B cell (primary cell): ENCODE measurements at regions of chr13 and their contacts with region 1.

Region 1: GRCh38 chr13:100235311-100235901 is 146.5 kb downstream of the PCCA start:
- DNase-seq: peak; percentile 50
- ATAC-seq: no peak
- H3K4me3 ChIP-seq: no peak overlapping the region
- H3K4me3 Mint-ChIP-seq: peak overlapping the region; percentile 23
- H3K27ac ChIP-seq: no peak overlapping the region
- H3K27ac Mint-ChIP-seq: no peak overlapping the region
- H3K4me1 ChIP-seq: peaks cover 6 to 7% of the 10 kb centered on the region in 2 donors
- H3K4me1 Mint-ChIP-seq: peaks cover 6% of the 10 kb centered on the region
- H3K27me3 ChIP-seq: no peaks in the 10 kb centered on the region
- H3K27me3 Mint-ChIP-seq: no peaks in the 10 kb centered on the region
- CTCF ChIP-seq: peak; percentile 67

Region 2: DNA sequence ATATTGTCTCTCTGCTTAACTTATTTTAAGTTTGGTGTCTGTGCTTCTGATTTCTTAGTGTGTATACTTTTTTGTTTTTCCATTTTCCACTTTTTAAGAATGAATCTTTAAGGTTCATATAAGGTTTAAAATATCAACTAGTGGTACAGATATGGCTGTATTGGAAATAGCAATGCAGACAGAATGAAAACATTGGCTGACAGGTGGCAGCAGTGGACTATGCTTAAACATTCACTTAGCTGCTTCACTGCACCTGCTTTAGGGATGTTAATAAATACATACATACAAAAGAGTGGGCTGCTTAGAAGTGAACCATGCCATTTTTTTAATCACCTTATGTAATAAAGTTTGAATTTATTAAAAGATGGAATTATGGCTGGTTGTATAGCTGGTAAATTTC is 706.9 kb before region 1 on chr13:
- CTCF ChIA-PET with region 1: interaction called, 6 read pairs
- POLR2A ChIA-PET with region 1: no interaction called
- intact Hi-C with region 1: loop called (anchors 5 kb)
- DNase-seq: peak; percentile 64
- ATAC-seq: no peak
- H3K4me3 ChIP-seq: no peak overlapping the region
- H3K4me3 Mint-ChIP-seq: no peak overlapping the region
- H3K27ac ChIP-seq: no peak overlapping the region
- H3K27ac Mint-ChIP-seq: no peak overlapping the region
- H3K4me1 ChIP-seq: no peaks in the 10 kb centered on the region
- H3K4me1 Mint-ChIP-seq: peaks cover 11% of the 10 kb centered on the region
- H3K27me3 ChIP-seq: no peaks in the 10 kb centered on the region
- H3K27me3 Mint-ChIP-seq: no peaks in the 10 kb centered on the region
- CTCF ChIP-seq: peak; percentile 52

Region 3: DNA sequence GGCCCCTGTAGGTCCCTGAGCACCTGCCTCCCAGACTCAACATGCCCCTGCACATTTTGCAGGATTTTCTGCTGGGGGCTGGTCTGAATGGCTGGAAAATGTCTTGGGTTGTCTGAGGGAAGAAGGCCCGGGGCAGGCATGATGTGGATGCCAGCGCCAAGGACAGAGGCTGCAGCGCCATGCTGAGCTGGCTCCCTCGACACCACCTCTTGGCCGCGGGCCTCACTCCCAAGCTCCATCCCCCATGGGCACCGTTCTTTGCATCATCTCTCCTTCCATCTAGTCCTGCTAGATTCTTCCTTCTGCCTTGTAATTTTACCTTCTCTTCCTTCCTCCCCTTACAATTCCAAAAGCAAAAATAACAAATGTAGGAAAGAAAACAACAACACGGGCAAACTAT is 334.4 kb before region 1 on chr13:
- CTCF ChIA-PET with region 1: interaction called, 5 read pairs
- POLR2A ChIA-PET with region 1: no interaction called
- intact Hi-C with region 1: loop called (anchors 5 kb)
- DNase-seq: no peak
- ATAC-seq: no peak
- H3K4me3 ChIP-seq: no peak overlapping the region
- H3K4me3 Mint-ChIP-seq: no peak overlapping the region
- H3K27ac ChIP-seq: no peak overlapping the region
- H3K27ac Mint-ChIP-seq: no peak overlapping the region
- H3K4me1 ChIP-seq: no peaks in the 10 kb centered on the region
- H3K4me1 Mint-ChIP-seq: peaks cover 2% of the 10 kb centered on the region
- H3K27me3 ChIP-seq: peaks cover 0 to 60% (median 19%) of the 10 kb centered on the region in 4 experiments
- H3K27me3 Mint-ChIP-seq: peaks cover 68% of the 10 kb centered on the region
- CTCF ChIP-seq: no peak